Activated CD4-positive, alpha-beta T cell treated with anti-CD3 and anti-CD28 coated beads for 36 hours (primary cell): ENCODE measurements at regions of chr19 and their contacts with region 1.

Region 1: DNA sequence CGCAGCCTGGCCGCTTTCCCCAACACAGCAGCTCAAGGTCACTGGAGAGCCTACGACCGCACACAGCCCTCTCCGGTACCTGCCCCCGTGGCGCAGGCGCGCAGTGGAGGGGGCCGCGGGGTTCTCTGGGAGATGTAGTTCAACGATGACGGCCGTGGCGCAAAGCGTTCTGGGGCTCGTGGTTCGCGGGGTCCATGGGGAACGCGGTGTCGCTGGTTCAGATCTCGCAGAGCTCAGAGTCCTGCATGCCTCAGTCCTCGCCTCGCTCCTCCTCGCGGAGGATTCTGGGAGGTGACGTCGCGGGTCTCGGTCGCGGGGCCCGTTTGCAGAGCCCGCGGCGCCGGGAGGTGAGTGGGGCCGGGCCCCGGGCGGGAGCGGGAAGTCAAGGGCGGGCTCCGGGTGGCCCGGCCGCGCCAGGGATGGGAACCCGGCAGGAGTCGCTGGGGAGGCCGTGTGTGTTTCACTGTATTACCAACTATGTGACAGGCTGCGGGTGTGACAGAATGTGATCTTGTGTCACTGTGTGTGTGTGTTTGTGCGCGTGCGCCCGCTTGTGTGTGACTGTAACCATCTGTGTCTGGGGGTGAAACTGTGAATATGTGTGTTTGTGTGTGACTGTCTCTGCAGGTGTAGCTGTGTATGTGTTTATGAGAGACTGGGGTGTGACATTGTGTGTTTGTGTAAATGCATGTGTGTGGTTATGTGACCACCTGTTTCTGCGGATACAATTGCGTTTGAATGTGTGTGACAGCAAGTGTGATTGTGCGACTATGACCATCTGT is at the start of gene ZNF527:
- DNase-seq: peak; percentile 98
- ATAC-seq: peak; percentile 99
- H3K4me3 Mint-ChIP-seq: peak within 1 kb of the TSS; percentile 85
- H3K27ac Mint-ChIP-seq: peak within 1 kb of the TSS; percentile 95
- H3K4me1 Mint-ChIP-seq: peaks cover 10% of the 10 kb centered on the region
- H3K27me3 Mint-ChIP-seq: no peaks in the 10 kb centered on the region
- total RNA-seq, gene ZNF527: 5.0 to 5.4 TPM

Region 2: GRCh38 chr19:36528194-36528920 is 842.7 kb before region 1 on chr19 and contains the start of gene ZNF260:
- CTCF ChIA-PET with region 1: no interaction called
- POLR2A ChIA-PET with region 1: no interaction called
- intact Hi-C with region 1: loop called in 1 of 2 experiments (anchors 2 kb)
- DNase-seq: peak; percentile 97
- ATAC-seq: peak; percentile 91
- H3K4me3 Mint-ChIP-seq: peak within 1 kb of the TSS; percentile 87
- H3K27ac Mint-ChIP-seq: peak within 1 kb of the TSS; percentile 96
- H3K4me1 Mint-ChIP-seq: peaks cover 14% of the 10 kb centered on the region
- H3K27me3 Mint-ChIP-seq: no peaks in the 10 kb centered on the region
- total RNA-seq, gene ZNF260: 5.7 to 8.2 TPM

Region 3: DNA sequence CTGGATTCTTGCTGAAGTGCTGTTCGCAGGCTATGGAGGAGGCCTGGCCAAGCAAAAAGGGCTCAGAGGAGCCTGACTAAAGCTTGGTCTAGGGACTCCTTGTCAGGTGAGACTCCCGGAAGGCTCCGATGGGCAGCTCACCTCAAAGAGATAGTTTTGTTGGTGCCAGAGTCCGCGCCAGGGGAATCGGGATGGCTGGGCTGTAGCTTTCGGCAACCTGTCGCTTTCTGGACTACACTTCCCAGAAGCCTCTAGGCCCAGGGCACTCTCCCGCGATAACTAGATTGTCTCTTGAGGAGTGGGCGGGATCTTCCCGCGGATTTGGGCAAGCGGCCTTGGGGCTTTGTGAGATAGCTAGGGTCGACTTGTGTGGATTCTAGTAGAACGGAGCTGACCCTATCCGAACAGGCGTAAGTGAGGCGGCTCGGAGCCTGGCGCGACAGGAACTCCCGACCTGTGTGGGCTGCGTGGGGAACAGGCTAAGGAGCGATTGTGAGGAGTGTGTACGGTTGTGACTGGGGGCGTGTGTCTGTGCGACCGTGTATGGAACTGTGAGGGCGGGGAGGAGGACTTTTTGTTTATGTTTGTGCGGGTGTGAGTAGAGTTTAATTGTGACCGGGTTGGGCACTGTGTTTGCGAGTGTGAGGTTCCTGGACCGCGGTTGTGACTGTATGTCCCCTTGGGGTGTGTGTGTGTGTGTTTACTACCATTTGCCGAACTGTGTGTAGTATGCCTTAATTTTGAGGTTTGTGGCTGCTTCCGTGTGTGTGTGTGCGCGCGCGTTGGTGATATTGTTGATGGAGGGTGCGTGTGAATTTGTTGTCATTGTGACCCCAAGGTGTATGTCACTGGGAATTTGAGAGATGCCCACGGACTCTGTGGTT is 520.3 kb before region 1 on chr19 and contains the start of gene ZNF345:
- CTCF ChIA-PET with region 1: no interaction called
- POLR2A ChIA-PET with region 1: interaction called, 6 read pairs
- intact Hi-C with region 1: loop called in 1 of 2 experiments (anchors 1 kb)
- DNase-seq: peak; percentile 91
- ATAC-seq: peak; percentile 82
- H3K4me3 Mint-ChIP-seq: no peak within 1 kb of the TSS
- H3K27ac Mint-ChIP-seq: no peak within 1 kb of the TSS
- H3K4me1 Mint-ChIP-seq: peaks cover 10% of the 10 kb centered on the region
- H3K27me3 Mint-ChIP-seq: no peaks in the 10 kb centered on the region
- total RNA-seq, gene ZNF345: 3.5 to 4.6 TPM

Region 4: GRCh38 chr19:37172368-37173366 is 198.4 kb before region 1 on chr19 and contains the start of gene ZNF585A:
- CTCF ChIA-PET with region 1: no interaction called
- POLR2A ChIA-PET with region 1: no interaction called
- intact Hi-C with region 1: loop called (anchors 1 kb)
- DNase-seq: peak; percentile 92
- ATAC-seq: peak; percentile 100
- H3K4me3 Mint-ChIP-seq: no peak within 1 kb of the TSS
- H3K27ac Mint-ChIP-seq: no peak within 1 kb of the TSS
- H3K4me1 Mint-ChIP-seq: no peaks in the 10 kb centered on the region
- H3K27me3 Mint-ChIP-seq: no peaks in the 10 kb centered on the region
- total RNA-seq, gene ZNF585A: 8.7 to 9.8 TPM

Region 5: DNA sequence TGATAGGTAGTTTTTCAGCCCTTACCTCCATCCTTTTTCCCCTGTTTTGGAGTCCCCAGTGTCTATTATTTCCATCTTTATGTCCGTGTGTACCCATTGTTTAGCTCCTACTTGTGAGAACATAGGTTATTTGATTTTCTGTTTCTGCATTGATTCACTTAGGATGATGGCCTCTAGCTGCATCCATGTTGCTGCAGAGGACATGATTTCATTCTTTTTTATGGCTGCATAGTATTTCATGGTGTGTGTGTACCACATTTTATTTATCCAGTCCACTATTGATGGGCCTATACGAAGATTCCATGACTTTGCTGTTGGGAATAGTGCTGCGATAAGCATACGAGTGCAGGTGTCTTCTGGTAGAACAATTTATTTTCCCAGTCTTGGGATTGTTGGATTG is 15.2 kb before region 1 on chr19:
- CTCF ChIA-PET with region 1: no interaction called
- POLR2A ChIA-PET with region 1: no interaction called
- intact Hi-C with region 1: no loop called
- DNase-seq: no peak
- ATAC-seq: no peak
- H3K4me3 Mint-ChIP-seq: no peak overlapping the region
- H3K27ac Mint-ChIP-seq: no peak overlapping the region
- H3K4me1 Mint-ChIP-seq: no peaks in the 10 kb centered on the region
- H3K27me3 Mint-ChIP-seq: no peaks in the 10 kb centered on the region

Region 6: GRCh38 chr19:37506387-37507166 is 135.5 kb after region 1 on chr19 and contains the start of gene ZNF793:
- CTCF ChIA-PET with region 1: no interaction called
- POLR2A ChIA-PET with region 1: interaction called, 3 read pairs
- intact Hi-C with region 1: loop called in 1 of 2 experiments (anchors 1 kb)
- DNase-seq: peak; percentile 87
- ATAC-seq: peak; percentile 87
- H3K4me3 Mint-ChIP-seq: no peak within 1 kb of the TSS
- H3K27ac Mint-ChIP-seq: no peak within 1 kb of the TSS
- H3K4me1 Mint-ChIP-seq: no peaks in the 10 kb centered on the region
- H3K27me3 Mint-ChIP-seq: no peaks in the 10 kb centered on the region
- total RNA-seq, gene ZNF793: 4.4 to 4.7 TPM

Region 7: GRCh38 chr19:37572203-37572602 is 201.1 kb after region 1 on chr19:
- CTCF ChIA-PET with region 1: no interaction called
- POLR2A ChIA-PET with region 1: no interaction called
- intact Hi-C with region 1: no loop called
- DNase-seq: no peak
- ATAC-seq: no peak
- H3K4me3 Mint-ChIP-seq: no peak overlapping the region
- H3K27ac Mint-ChIP-seq: no peak overlapping the region
- H3K4me1 Mint-ChIP-seq: no peaks in the 10 kb centered on the region
- H3K27me3 Mint-ChIP-seq: no peaks in the 10 kb centered on the region

Region 8: GRCh38 chr19:37691881-37692504 is 320.9 kb after region 1 on chr19:
- CTCF ChIA-PET with region 1: no interaction called
- POLR2A ChIA-PET with region 1: interaction called, 3 read pairs
- intact Hi-C with region 1: loop called in 1 of 2 experiments (anchors 1 kb)
- DNase-seq: peak; percentile 93
- ATAC-seq: peak; percentile 96
- H3K4me3 Mint-ChIP-seq: peak overlapping the region; percentile 92
- H3K27ac Mint-ChIP-seq: peak overlapping the region; percentile 95
- H3K4me1 Mint-ChIP-seq: peaks cover 9% of the 10 kb centered on the region
- H3K27me3 Mint-ChIP-seq: no peaks in the 10 kb centered on the region

Region 9: GRCh38 chr19:37706052-37706605 is 335.1 kb after region 1 on chr19:
- CTCF ChIA-PET with region 1: no interaction called
- POLR2A ChIA-PET with region 1: no interaction called
- intact Hi-C with region 1: no loop called
- DNase-seq: no peak
- ATAC-seq: no peak
- H3K4me3 Mint-ChIP-seq: no peak overlapping the region
- H3K27ac Mint-ChIP-seq: no peak overlapping the region
- H3K4me1 Mint-ChIP-seq: peaks cover 3% of the 10 kb centered on the region
- H3K27me3 Mint-ChIP-seq: no peaks in the 10 kb centered on the region